ENCODE measurements at regions of chr1 and their contacts with region 1.

Region 1: DNA sequence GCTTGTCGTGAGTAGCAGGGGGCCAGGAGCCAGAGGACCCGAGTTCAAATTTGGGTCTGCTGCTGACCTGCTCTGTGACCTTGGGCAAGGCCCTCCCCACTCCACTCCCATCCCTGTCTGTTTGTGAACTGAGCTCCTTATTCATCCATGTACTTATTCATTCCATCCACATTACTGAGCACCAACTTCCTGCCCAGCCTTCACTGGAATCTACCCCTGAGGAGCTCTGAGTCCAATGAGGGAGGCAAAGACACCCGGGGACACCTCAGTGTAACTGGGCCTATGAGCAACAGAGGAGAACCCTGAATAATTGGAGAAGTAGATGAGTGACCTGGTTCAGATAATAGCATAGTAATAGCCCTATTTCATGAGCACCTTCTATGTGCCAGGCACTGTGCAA is 8.9 kb downstream of the BSND start:
- DNase-seq: peak; percentile 74
- ATAC-seq: peak; percentile 96
- H3K4me3 ChIP-seq: no peak overlapping the region
- H3K27ac ChIP-seq: no peak overlapping the region
- H3K4me1 ChIP-seq: peaks cover 10% of the 10 kb centered on the region
- H3K27me3 ChIP-seq: no peaks in the 10 kb centered on the region
- CTCF ChIP-seq: no peak

Region 2: GRCh38 chr1:54872036-54872331 is 135.6 kb before region 1 on chr1:
- CTCF ChIA-PET with region 1: no interaction called
- POLR2A ChIA-PET with region 1: no interaction called
- intact Hi-C with region 1: loop called (anchors 10 kb)
- DNase-seq: no peak
- ATAC-seq: no peak
- H3K4me3 ChIP-seq: no peak overlapping the region
- H3K27ac ChIP-seq: no peak overlapping the region
- H3K4me1 ChIP-seq: peaks cover 48% of the 10 kb centered on the region
- H3K27me3 ChIP-seq: no peaks in the 10 kb centered on the region
- CTCF ChIP-seq: no peak; the same call in 1 of the 2 replicates

Region 3: GRCh38 chr1:55127827-55128343 is 120.3 kb after region 1 on chr1:
- CTCF ChIA-PET with region 1: no interaction called
- POLR2A ChIA-PET with region 1: no interaction called
- intact Hi-C with region 1: no loop called
- DNase-seq: peak; percentile 69
- ATAC-seq: peak; percentile 87
- H3K4me3 ChIP-seq: no peak overlapping the region
- H3K27ac ChIP-seq: peak overlapping the region; percentile 84
- H3K4me1 ChIP-seq: peaks cover 32% of the 10 kb centered on the region
- H3K27me3 ChIP-seq: no peaks in the 10 kb centered on the region
- CTCF ChIP-seq: no peak

Measured in PC-3 (cell line).